Head of caudate nucleus (tissue), 42 donors: ENCODE measurements at regions of chr18 and their contacts with region 1.

Region 1: DNA sequence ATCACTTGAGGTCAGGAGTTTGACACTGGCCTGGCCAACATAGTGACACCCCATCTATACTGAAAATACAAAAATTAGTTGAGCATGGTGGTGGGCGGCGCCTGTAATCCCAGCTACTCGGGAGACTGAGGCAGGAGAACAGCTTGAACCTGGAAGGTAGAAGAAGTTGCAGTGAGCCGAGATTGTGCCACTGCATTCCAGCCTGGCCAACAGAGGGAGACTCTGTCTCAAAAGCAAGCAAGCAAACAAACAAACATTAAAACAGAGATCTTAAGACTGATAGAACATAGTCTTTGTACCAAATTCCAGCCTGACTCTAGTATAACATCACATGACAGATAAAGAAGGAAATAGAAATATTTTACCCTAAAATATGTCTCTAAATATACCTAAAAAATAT is 168.1 kb downstream of the PTPRM start:
- DNase-seq: no peak

Region 2: DNA sequence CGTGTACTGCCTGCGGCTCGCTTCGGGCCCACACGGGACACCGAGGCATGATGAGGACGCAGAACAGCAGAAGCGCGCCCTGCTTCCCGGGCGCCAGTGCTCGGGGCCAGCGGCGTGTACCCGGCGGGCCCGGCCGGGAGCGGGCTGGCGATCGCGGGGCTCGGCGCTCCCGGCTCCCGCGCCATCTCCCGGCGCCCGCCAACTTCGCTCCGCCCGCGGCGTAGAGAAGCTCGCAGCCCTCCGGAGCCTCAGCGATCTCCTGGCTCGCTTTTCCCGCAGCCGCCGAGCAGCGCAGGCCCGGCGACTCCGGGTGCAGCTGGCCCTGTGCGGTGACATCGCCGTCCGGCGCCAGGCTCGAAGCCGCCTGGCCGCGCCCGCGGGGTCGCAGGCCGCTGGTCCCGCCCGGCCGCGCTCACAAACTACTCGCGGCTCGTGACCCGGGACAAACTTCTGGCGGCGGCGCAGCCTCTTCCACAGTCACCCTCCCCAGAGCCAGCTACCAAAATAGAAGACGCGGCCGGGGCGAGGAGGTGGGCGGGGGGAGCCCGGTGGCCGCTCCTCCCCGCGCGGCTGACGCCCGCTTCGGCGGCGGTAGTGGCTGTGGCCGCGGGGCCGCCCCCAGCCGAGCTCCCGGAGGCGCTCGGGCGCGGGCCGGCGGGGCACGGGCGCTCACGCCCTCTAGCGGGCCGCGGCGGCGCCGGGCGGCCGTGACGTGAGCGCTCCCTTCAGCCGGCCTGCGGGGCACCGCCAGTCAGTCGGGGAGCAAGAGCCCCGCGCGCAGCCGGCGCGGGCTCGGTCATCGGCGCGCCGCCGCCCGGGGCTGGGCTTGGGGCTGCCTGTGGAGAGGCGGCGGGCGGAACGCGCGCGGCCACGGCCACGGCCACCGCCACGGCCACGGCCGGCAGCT is 168.4 kb before region 1 on chr18 and contains the start of gene PTPRM:
- intact Hi-C with region 1: loop called (anchors 10 kb)
- DNase-seq: peak; percentile 53 to 91 (median 81)

Region 3: GRCh38 chr18:7601246-7601615 is 134.0 kb before region 1 on chr18:
- intact Hi-C with region 1: no loop called
- DNase-seq: no peak